Mammary epithelial cell (primary cell): ENCODE measurements at regions of chr4 and their contacts with region 1.

Region 1: GRCh38 chr4:69749771-69750170 is 10.6 kb downstream of the SULT1B1 start:
- DNase-seq: peak; percentile 74
- H3K4me3 ChIP-seq: no peak overlapping the region
- H3K27ac ChIP-seq: no peak overlapping the region
- H3K4me1 ChIP-seq: peaks cover 26% of the 10 kb centered on the region
- H3K27me3 ChIP-seq: no peaks in the 10 kb centered on the region
- CTCF ChIP-seq: no peak

Region 2: DNA sequence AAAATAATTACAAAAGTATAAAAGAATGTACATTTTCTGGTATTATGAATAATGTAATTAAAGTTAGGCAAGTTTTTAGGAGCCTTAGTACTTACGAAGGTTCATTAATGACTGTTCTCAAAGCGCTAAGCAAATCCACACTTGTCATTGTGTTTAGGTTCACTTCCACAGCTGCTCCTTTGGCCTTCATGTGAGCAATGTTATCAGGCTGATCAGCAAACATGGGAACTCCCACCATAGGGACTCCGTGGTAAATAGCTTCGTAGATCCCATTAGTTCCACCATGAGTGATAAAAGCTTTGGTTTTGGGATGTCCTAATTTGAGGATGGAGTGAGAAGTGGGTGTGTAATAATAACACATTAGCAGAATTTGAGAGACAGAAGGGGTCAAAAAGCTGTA is 155.4 kb before region 1 on chr4:
- CTCF ChIA-PET with region 1: no interaction called
- dilution Hi-C with region 1: no loop called
- in situ Hi-C with region 1: no loop called
- intact Hi-C with region 1: no loop called
- DNase-seq: no peak
- H3K4me3 ChIP-seq: no peak overlapping the region
- H3K27ac ChIP-seq: no peak overlapping the region
- H3K4me1 ChIP-seq: no peaks in the 10 kb centered on the region
- H3K27me3 ChIP-seq: no peaks in the 10 kb centered on the region
- CTCF ChIP-seq: no peak

Region 3: DNA sequence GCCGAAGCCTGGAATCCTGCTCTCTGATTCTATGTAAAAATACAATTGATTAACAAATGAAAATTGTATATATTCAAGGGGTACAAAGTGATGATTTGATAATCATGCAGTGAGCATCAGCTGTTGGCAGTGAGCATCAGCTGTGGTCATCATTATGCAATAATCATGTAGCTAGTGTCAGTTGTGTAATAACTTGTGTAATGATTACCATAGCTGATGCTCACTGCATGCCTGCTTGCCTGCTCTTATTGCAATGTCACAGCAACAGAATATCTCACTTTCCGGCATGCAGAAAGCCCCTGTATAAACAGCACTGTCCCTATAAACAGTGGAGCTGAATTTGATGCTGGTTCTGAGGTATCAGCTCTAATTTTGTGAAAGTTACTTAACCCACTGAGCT is 36.2 kb before region 1 on chr4:
- CTCF ChIA-PET with region 1: no interaction called
- dilution Hi-C with region 1: no loop called
- in situ Hi-C with region 1: no loop called
- intact Hi-C with region 1: loop called (anchors 5 kb)
- DNase-seq: peak; percentile 52
- H3K4me3 ChIP-seq: no peak overlapping the region
- H3K27ac ChIP-seq: no peak overlapping the region
- H3K4me1 ChIP-seq: peaks cover 17% of the 10 kb centered on the region
- H3K27me3 ChIP-seq: no peaks in the 10 kb centered on the region
- CTCF ChIP-seq: no peak